WTC11 (cell line): ENCODE measurements at regions of chr15 and their contacts with region 1.

Region 1: DNA sequence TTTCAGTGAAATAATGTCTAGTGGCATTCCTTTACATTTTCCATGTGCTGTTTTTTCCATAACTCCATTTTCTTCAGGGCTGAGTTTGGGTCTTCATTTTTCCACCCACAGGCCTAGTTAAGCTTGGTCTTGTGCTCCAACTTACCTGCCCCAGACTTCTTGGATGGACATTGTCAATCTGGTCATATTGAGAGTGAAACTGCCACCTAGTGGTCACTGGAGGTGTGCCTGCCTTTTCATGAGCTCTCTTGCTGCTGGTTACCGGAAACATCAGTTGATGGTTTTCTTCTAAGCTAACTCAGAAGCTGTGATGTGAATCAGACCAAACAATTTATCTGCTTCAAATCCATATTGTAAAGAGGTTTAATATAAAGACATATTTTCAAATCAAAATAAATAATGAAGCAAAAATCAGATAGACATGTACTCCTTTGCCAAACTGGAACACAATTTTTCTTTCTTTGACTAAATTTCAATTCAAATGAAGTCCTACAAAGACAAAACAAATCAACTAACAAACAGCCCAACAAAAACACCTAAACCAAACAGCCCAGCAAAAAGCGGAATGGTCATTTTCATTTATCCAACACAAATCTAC is 135.1 kb upstream of the RASGRP1 start:
- DNase-seq: peak; percentile 67
- ATAC-seq: peak; percentile 68
- H3K4me3 Mint-ChIP-seq: no peak overlapping the region
- H3K27ac Mint-ChIP-seq: no peak overlapping the region
- H3K4me1 Mint-ChIP-seq: peaks cover 13% of the 10 kb centered on the region
- H3K27me3 Mint-ChIP-seq: no peaks in the 10 kb centered on the region
- CTCF ChIP-seq: peak; percentile 60

Region 2: GRCh38 chr15:37995461-37996347 is 704.0 kb before region 1 on chr15:
- CTCF ChIA-PET with region 1: interaction called, 11 read pairs
- POLR2A ChIA-PET with region 1: no interaction called
- DNase-seq: no peak
- ATAC-seq: peak; percentile 85
- H3K4me3 Mint-ChIP-seq: no peak overlapping the region
- H3K27ac Mint-ChIP-seq: no peak overlapping the region
- H3K4me1 Mint-ChIP-seq: no peaks in the 10 kb centered on the region
- H3K27me3 Mint-ChIP-seq: no peaks in the 10 kb centered on the region
- CTCF ChIP-seq: peak; percentile 29

Region 3: DNA sequence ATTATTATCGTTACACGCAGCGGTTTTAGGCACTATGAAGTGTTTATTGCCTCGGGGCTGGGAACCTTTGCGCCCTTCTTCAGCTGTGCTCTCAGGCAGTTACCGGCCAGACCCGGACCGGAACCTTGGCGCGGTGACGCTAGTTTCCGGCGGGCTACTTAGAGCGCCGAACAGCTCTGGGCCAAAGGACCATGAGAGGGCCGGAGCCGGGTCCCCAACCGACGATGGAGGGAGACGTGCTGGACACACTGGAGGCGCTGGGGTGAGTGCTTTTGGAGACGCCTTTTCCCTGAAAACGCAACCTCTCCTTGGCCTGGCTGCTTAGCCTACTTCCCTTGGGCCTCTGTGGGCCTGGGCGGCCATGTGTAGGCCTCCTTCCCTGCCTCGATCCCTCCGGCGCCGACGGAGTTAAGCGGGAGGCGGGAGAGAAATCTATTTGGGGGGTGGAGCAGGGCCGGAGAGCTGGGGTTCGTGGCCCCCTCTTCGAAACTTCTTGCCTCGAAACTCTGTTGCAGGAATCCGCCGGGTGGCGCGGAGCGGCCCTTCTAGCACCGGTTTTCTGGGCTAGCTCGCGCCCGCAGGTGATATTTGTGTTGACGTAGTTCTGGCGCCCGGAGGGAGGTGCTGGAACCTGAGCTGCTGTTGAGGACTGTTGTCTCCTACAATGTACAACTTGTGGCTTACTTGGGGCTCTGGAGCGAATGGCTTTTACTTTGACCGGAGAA is 245.6 kb before region 1 on chr15 and contains the start of gene FAM98B:
- CTCF ChIA-PET with region 1: interaction called, 11 read pairs
- POLR2A ChIA-PET with region 1: no interaction called
- DNase-seq: peak; percentile 92
- ATAC-seq: peak; percentile 96
- H3K4me3 Mint-ChIP-seq: peak within 1 kb of the TSS; percentile 93
- H3K27ac Mint-ChIP-seq: peak within 1 kb of the TSS; percentile 96
- H3K4me1 Mint-ChIP-seq: peaks cover 13% of the 10 kb centered on the region
- H3K27me3 Mint-ChIP-seq: no peaks in the 10 kb centered on the region; the same call in 1 of the 2 replicates
- CTCF ChIP-seq: no peak
- total RNA-seq, gene FAM98B: 38.1 to 46.6 TPM (median 38.5 TPM) in 3 replicates

Region 4: GRCh38 chr15:38499651-38500050 is 200.1 kb before region 1 on chr15:
- CTCF ChIA-PET with region 1: interaction called, 11 read pairs
- POLR2A ChIA-PET with region 1: no interaction called
- DNase-seq: no peak
- ATAC-seq: no peak
- H3K4me3 Mint-ChIP-seq: no peak overlapping the region
- H3K27ac Mint-ChIP-seq: no peak overlapping the region
- H3K4me1 Mint-ChIP-seq: no peaks in the 10 kb centered on the region
- H3K27me3 Mint-ChIP-seq: no peaks in the 10 kb centered on the region
- CTCF ChIP-seq: no peak

Region 5: DNA sequence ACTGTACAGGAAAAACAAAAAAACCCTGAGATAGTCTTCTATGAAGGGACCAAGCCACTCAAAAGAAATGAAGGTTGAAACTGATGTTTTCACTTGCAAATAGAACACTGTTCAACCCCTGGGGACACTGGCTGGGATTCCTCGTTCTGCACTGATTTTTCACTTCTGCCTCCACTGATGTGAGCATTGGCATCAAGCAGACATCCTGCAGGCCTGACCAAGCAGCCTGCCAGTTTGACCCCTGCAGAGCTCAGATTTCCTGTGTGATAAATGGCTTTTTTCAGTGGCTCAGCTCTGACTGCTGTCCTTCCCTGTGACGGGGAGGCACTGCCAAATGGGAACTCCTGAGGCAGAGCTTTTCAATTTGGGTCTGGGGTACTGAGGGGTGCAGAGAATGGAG is 185.1 kb before region 1 on chr15:
- CTCF ChIA-PET with region 1: interaction called, 20 read pairs
- POLR2A ChIA-PET with region 1: no interaction called
- DNase-seq: no peak
- ATAC-seq: peak; percentile 70
- H3K4me3 Mint-ChIP-seq: no peak overlapping the region
- H3K27ac Mint-ChIP-seq: peak overlapping the region; percentile 37; the same call in 1 of the 2 replicates
- H3K4me1 Mint-ChIP-seq: peaks cover 41% of the 10 kb centered on the region
- H3K27me3 Mint-ChIP-seq: no peaks in the 10 kb centered on the region
- CTCF ChIP-seq: no peak

Region 6: DNA sequence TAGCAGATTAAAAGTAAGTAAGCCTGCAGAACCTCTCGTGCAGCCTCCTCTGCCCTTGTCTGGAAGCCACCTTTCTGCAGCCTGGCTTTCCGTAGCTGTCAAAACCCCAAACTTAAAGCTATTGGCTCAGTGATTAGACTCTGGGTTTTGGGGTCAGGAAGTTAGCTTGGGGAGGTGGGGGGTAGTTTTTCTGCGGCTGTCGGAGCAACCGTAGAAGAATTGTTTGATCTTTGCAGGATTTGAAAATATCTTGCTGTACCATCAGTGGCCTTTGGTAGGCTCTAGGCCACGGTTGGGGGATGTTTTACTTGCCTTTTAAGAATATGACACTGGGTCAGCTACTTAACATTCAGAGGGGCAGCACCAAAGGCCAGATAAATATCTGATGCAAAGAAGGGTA is 46.7 kb before region 1 on chr15:
- CTCF ChIA-PET with region 1: interaction called, 11 read pairs
- POLR2A ChIA-PET with region 1: no interaction called
- DNase-seq: no peak
- ATAC-seq: peak; percentile 33; the same call in 1 of the 2 replicates
- H3K4me3 Mint-ChIP-seq: no peak overlapping the region
- H3K27ac Mint-ChIP-seq: no peak overlapping the region
- H3K4me1 Mint-ChIP-seq: peaks cover 19% of the 10 kb centered on the region
- H3K27me3 Mint-ChIP-seq: no peaks in the 10 kb centered on the region; the same call in 1 of the 2 replicates
- CTCF ChIP-seq: no peak

Region 7: DNA sequence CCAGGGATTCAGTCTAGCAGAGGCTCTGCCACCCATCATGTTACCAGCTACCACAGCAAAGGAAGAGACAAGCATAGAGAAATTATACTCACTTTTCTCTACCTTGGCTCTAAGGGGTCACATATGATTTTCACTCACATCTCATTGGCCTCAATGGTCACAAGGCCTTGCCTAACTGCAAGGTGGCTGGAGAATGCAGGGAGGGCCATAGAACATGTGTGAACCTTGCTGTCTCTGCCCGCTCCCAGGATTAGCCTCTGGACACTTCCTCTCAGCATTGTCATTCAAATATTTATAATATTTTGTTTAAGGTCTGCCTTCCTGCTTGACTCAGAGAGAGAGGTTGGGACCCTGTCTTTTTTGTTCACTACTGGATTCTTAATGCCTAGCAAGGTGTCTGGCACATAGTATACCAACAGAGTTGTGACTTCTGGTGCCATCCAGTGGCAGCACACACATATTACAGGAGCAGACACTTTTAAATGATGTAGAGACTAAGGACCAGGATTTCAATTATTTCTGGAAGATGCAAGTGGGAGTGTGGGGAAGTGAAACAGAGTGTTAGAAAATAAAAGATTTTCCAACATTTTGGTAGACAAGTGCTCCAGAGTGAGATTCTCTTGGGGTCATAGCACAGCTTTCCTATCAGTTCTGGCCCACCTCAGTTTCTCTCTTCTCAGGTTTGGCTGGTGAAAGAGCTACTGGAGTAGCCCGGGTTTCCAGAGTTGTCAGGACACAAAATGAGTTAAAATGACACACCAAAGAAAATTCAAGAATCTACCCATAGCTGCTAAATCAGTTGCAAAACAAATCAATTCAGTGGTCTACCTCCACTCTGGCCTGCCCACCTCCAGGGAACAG is 16.1 kb before region 1 on chr15:
- CTCF ChIA-PET with region 1: interaction called, 83 read pairs
- POLR2A ChIA-PET with region 1: interaction called, 4 read pairs
- DNase-seq: peak; percentile 65
- ATAC-seq: peak; percentile 94
- H3K4me3 Mint-ChIP-seq: no peak overlapping the region
- H3K27ac Mint-ChIP-seq: no peak overlapping the region
- H3K4me1 Mint-ChIP-seq: peaks cover 8% of the 10 kb centered on the region
- H3K27me3 Mint-ChIP-seq: no peaks in the 10 kb centered on the region; the same call in 1 of the 2 replicates
- CTCF ChIP-seq: peak; percentile 70

Region 8: GRCh38 chr15:38817427-38818156 is 117.9 kb after region 1 on chr15:
- CTCF ChIA-PET with region 1: no interaction called
- POLR2A ChIA-PET with region 1: no interaction called
- DNase-seq: peak; percentile 95
- ATAC-seq: peak; percentile 99
- H3K4me3 Mint-ChIP-seq: no peak overlapping the region
- H3K27ac Mint-ChIP-seq: no peak overlapping the region
- H3K4me1 Mint-ChIP-seq: peaks cover 9% of the 10 kb centered on the region
- H3K27me3 Mint-ChIP-seq: no peaks in the 10 kb centered on the region
- CTCF ChIP-seq: peak; percentile 98